Posterior vena cava (tissue), 2 donors: ENCODE measurements at regions of chr1 and their contacts with region 1.

Region 1: GRCh38 chr1:157992031-157992832 is 1.2 kb upstream of the KIRREL1 start:
- DNase-seq: peak; percentile 88

Region 2: DNA sequence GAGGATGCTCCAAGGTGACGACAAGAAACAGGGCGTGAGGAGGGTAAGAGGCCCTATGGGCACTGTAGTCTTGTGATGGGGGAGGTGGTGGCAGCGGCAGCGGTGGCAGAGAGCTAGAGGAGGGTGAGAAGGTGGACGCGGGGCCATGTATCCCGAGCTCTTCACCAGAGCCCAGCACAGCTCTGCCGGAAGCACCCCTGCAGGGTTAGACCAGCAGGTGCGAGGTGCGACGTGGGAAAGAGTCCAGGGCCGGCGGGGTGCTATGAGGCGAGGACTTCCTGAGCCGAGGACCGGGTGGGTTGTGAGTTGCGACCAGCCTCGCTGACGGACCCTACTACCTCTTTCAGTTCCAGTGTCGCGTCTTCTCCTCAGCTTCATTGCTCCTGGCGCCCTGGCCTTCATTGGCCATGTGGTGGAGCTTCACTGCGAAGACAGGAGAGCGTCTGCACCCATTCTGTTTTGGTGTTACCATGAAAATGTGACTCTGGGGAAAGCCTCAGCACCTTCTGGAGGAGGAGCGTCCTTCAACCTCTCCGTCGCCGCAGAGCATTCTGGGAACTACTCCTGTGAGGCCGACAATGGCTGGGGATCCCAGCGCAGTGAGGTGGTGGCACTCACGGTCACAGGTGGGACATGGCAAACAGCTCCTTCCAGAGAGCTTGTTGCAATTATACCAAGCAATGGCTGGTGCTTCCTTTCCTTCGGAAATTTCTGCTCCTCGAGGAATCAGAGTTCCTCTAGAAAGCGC is 66.6 kb before region 1 on chr1:
- intact Hi-C with region 1: no loop called
- DNase-seq: no peak

Region 3: DNA sequence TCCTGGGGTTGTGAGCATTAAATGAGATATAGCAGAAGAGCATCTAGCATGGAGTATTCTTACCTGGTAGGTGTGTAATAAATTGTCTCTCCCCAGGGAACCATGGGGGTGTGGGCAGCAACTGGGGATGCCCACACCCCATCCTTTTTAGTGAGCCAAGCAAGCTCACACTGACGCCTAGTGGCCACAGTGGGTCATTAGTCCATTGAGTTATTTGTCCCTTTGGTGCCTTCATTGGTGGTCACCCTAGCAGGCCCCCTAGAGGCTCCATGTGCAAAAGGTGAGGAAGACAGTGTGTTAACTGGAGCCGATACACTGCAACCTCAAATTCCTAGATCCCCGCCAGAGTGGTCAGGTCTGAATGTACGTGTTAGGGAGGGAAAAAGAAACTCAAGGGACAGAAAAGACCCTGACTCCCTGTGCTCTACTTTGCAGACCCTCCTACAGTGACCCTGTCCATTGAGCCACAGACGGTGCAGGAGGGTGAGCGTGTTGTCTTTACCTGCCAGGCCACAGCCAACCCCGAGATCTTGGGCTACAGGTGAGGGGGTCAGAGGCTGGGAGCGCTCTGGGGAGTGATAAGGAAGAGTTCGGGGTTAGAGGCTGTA is 95.2 kb after region 1 on chr1:
- intact Hi-C with region 1: loop called (anchors 2 to 5 kb)
- DNase-seq: no peak